ENCODE measurements at regions of chr4 and their contacts with region 1.

Region 1: DNA sequence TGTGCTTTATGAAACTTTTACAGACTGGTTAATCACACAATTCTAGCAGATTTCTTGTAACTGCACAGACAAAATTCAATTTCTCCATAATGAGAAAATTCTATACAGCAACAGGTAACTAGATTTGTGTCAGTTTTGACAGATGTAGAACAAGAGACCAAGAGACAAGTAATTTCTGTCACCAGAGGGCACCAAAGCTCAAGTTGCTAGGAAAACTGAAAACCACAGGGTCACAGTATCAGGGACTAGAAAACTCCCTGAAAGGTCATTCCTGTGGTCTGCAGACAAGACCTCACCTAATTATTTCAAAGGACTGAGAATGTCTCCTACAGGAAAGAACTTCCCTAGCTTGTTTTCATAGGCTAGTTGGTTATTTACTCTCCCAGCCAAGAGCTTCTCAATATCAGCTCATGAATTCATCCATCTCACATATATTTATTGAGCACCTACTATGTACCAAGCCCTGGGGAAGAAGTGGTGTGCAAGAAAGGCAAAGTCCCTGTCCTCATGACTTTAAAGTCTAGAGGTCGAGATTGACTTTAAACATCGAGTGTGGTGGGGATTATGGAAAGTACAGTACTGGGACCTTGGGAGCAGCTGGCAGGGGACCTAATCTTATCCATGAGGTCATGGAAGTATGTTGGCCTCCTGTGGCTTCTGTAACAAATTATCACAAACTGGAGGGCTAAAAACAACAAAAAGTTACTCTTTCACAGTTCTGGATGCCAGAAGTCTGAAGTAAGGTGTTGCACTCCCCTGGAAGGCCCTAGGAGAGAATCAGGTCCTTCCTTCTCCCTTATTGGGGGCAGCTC is 47.8 kb upstream of the SETD7 start:
- DNase-seq: peak; percentile 48
- H3K4me3 Mint-ChIP-seq: no peak overlapping the region
- H3K27ac Mint-ChIP-seq: no peak overlapping the region
- H3K4me1 Mint-ChIP-seq: peaks cover 12% of the 10 kb centered on the region
- H3K27me3 Mint-ChIP-seq: peaks cover 21% of the 10 kb centered on the region

Region 2: GRCh38 chr4:139619644-139620043 is 15.9 kb after region 1 on chr4:
- CTCF ChIA-PET with region 1: interaction called, 10 read pairs
- DNase-seq: peak; percentile 27
- H3K4me3 Mint-ChIP-seq: no peak overlapping the region
- H3K27ac Mint-ChIP-seq: no peak overlapping the region
- H3K4me1 Mint-ChIP-seq: no peaks in the 10 kb centered on the region
- H3K27me3 Mint-ChIP-seq: peaks cover 13% of the 10 kb centered on the region

Region 3: DNA sequence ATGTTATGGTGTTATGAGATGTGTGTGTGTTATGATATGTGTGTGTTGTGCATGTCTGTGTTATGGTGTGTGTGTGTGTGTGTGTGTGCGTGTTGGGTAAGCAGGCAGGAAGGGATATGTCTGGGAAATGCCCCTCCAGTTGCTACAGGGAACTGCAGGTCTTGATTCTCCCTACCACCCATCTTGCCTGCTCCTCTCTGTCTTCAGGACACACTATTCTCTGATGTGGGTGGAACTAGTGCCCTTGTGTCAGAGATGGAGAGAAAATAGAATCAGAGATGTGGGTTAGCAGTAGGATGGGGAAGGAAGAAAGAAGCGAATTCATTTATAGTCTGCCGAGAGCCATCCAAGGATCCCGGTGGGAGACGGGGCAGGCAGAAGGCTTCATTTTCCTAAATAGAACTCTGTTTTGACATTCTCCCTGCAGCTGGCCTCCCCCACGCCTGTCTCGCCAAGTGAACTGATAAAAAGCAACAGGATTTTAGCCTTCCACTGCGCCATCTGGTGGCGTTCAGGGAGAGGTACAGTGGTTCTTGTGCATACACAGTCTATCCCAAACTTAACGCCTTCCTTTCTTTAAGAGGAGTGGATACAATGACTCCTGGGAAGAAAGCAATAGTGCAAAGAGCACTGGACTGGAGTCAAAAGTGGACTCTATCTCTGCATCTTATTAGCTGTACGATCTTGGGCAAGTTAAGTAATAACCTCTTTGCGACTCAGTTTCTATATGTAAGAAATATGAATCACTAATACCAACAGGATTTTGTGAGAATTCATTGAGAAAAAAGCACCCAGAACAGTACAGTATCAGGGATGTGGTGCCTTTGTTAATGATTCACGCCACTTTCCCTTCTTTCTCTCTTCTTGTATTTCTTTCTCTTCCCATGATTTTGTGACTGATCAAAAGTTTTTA is 47.8 kb after region 1 on chr4:
- CTCF ChIA-PET with region 1: interaction called, 165 read pairs
- DNase-seq: peak; percentile 79
- H3K4me3 Mint-ChIP-seq: no peak overlapping the region
- H3K27ac Mint-ChIP-seq: peak overlapping the region; percentile 4
- H3K4me1 Mint-ChIP-seq: peaks cover 6% of the 10 kb centered on the region
- H3K27me3 Mint-ChIP-seq: peaks cover 10% of the 10 kb centered on the region

Region 4: GRCh38 chr4:139704915-139705485 is 101.2 kb after region 1 on chr4:
- CTCF ChIA-PET with region 1: interaction called, 10 read pairs
- DNase-seq: no peak
- H3K4me3 Mint-ChIP-seq: no peak overlapping the region
- H3K27ac Mint-ChIP-seq: no peak overlapping the region
- H3K4me1 Mint-ChIP-seq: no peaks in the 10 kb centered on the region
- H3K27me3 Mint-ChIP-seq: no peaks in the 10 kb centered on the region

Measured in activated naive CD4-positive, alpha-beta T cell treated with anti-CD3 and anti-CD28 coated beads, Interleukin-2, amount 10 ng/mL, durations not matched to agents 7 days and 5 days (primary cell).